ENCODE measurements at regions of chr1 and their contacts with region 1.

Region 1: GRCh38 chr1:61851849-61852669 is 109.8 kb downstream of the PATJ start:
- DNase-seq: peak; percentile 74
- H3K4me3 ChIP-seq: no peak overlapping the region
- H3K27ac ChIP-seq: peak overlapping the region; percentile 45
- H3K4me1 ChIP-seq: peaks cover 14% of the 10 kb centered on the region
- H3K27me3 ChIP-seq: no peaks in the 10 kb centered on the region
- CTCF ChIP-seq: peak; percentile 40 to 58
- POLR2A ChIP-seq: no peak

Region 2: DNA sequence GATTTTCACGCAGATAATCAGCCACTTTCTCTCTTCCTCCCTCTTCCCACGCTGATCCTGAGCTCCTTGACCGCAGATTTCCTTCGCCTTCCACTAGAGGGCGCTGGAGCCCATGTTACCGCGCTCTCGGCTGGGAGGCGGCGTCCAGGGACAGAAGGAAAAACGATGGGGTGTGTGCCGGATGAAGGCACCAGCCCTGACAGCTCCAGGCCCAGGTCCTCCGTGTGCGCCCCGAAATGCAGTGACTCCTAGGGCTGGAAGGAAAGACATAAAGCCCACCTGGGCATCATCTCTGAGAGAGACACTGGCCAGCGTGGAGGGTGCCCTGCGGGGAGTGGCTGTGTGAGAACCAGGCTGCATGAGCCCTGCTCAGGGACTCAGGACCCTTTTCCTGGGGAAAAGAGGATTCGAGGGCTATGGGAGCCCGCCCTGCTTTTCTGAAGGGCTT is 1880.6 kb before region 1 on chr1:
- CTCF ChIA-PET with region 1: interaction called, 64 read pairs
- POLR2A ChIA-PET with region 1: no interaction called
- dilution Hi-C with region 1: no loop called
- intact Hi-C with region 1: loop called (anchors 1 kb)
- DNase-seq: peak; percentile 63
- H3K4me3 ChIP-seq: no peak overlapping the region
- H3K27ac ChIP-seq: no peak overlapping the region
- H3K4me1 ChIP-seq: peaks cover 2% of the 10 kb centered on the region
- H3K27me3 ChIP-seq: peaks cover 0 to 11% of the 10 kb centered on the region in 2 experiments
- CTCF ChIP-seq: peak; percentile 83 to 91
- POLR2A ChIP-seq: no peak

Region 3: DNA sequence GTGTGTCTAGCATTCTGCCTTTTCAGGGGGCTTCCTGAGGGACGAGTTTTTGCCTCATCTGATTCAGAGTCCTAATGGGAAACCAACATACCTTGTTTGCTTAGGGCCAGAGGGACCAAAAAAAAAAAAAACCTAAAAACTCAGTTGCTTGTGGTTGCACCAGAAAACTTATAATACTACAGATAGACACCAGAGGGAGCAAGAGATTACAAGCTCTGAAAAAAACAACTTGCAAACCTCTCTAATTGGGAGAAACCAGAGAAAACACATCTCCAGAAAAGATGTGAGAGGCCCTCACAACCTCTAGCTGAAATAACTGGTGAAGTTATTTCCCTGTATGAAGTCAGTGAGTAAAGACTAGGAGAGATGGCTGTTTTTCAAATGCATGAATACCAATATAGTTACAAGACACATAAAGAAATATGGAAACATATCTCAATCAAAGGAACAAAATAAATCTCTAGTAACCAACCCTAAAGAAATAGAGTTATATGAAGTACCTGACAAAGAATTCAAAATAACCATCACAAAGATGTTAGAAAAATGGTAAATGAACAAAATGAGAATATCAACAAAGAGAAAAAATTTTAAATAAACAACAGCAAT is 1003.4 kb before region 1 on chr1:
- CTCF ChIA-PET with region 1: interaction called, 29 read pairs
- POLR2A ChIA-PET with region 1: no interaction called
- dilution Hi-C with region 1: no loop called
- intact Hi-C with region 1: loop called (anchors 1 kb)
- DNase-seq: peak; percentile 79
- H3K4me3 ChIP-seq: no peak overlapping the region
- H3K27ac ChIP-seq: no peak overlapping the region
- H3K4me1 ChIP-seq: no peaks in the 10 kb centered on the region
- H3K27me3 ChIP-seq: no peaks in the 10 kb centered on the region
- CTCF ChIP-seq: peak; percentile 35 to 45
- POLR2A ChIP-seq: no peak

Region 4: DNA sequence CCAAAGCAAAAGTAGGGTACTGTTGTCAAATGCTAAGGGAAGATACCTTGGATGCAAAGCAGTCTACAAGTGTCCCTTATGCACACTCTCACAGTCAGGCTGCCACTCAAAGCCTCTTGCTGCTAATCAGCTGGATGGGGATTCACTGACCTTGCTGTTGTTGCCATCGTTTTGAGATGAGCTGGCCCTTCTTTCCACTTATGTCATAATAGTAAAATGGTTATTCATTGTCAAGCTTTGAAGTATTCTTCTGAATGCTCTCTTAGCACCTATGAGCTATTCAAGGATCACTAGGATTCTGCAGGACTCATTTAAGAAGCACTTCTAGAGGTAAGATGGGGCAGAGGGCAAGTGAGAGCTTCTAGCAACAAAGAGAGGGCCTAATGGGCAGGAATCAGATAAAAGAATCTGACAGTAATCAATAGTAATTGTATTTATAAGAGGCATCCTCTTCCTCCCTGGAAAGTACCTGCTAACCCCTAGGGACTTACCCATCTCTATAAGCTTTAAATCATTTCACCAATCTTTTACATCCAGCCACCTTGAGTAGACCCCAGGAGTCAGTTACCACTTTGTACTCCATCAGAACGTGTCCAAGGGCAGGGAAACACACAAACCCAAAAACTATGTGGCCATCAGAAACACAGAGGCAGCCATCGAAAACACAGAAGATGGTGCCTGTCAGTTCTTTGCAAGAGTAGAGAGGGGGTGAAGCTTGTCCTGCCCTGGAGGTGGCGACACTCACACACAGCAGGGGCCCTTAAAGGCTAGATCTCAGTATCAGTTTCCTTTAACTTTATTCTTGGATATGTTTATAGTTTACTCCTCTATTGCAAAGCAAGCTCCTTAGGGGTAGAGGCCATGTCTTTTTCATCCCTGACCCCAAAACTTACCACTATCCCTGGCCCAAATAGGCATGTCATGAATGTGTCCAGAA is 873.4 kb before region 1 on chr1:
- CTCF ChIA-PET with region 1: interaction called, 49 read pairs
- POLR2A ChIA-PET with region 1: no interaction called
- dilution Hi-C with region 1: no loop called
- intact Hi-C with region 1: loop called (anchors 1 kb)
- DNase-seq: peak; percentile 69
- H3K4me3 ChIP-seq: no peak overlapping the region
- H3K27ac ChIP-seq: no peak overlapping the region
- H3K4me1 ChIP-seq: peaks cover 6% of the 10 kb centered on the region
- H3K27me3 ChIP-seq: no peaks in the 10 kb centered on the region
- CTCF ChIP-seq: peak; percentile 60 to 77
- POLR2A ChIP-seq: no peak

Region 5: DNA sequence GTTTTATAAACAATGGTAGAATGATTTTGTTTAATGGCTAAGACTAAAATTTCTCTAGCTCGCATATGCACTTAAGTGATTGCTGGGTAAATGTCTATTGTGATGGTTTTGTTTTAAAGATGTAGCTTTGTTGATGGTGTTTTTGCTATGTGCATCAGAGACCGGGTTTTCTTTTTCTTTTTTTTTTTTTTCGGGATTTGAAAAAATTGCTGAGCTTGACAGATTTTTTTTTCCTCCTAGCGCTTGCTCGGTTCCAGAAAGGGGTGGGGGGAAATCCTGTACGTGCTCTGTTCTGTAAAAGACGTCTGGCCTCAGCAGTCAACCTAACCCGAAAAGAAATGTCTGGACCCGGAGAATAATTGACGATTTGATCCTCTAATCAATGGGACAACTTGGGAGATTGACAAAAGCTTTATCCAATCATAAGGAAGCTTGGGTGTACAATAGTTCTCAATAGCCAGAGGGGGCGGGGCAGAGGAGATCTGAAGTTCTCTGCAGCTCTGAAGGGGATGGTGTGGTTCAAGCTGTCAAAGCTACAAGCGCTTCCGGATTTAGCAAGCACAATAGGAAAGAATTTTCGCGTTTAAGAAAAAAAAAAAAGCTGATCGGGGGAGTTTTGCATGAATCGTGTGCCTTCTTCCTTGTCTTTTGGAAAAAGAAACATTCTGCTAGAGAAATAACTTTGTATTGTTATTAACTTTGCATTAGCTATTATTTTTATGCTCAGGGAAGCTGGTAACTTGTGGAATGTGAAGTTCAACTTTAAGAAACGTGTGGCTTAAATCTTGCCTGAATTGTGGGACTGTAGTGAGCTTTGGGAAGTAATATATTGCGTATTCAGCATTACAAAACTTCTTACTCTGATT is 774.1 kb before region 1 on chr1:
- CTCF ChIA-PET with region 1: interaction called, 14 read pairs
- POLR2A ChIA-PET with region 1: no interaction called
- dilution Hi-C with region 1: no loop called
- intact Hi-C with region 1: loop called (anchors 1 kb)
- DNase-seq: peak; percentile 100
- H3K4me3 ChIP-seq: peak overlapping the region; percentile 44 to 97 (median 77)
- H3K27ac ChIP-seq: peak overlapping the region; percentile 45
- H3K4me1 ChIP-seq: peaks cover 41% of the 10 kb centered on the region
- H3K27me3 ChIP-seq: no peaks in the 10 kb centered on the region
- CTCF ChIP-seq: no peak
- POLR2A ChIP-seq: peak; percentile 10

Region 6: DNA sequence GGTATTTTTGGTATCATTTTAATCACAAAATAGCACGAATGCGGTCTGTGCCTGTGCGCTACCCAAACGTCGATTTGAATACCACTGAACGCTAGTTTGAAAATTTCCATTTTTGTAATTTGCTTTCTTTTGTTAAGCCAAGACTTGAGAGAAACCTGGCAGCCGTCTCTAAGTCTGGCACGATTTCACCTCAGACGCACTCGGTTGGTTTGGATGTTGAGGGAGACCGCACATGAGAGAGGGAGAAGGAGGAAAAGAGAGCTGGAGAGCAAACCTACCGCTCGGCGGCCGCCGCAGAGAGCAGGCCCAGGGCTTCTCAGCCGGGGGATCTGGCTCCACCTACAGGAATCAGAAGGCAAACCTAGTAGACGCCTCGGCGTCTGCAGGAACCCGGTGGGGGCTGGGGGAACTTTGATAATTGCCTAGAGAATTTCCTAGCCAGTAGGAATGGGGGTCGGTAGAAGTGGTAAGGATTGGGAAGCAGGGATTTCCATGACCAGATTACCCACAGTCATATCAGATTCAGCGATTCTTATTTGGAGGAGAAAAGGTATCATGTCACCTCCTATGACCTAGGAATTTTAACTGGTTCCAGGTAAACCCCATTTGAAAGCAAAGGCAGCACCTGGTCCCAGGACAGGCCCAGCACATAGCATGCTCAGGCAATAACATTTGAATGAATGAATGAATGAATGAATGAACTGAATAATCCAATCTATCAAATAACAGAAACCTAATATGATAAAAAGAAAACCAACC is 210.3 kb before region 1 on chr1:
- CTCF ChIA-PET with region 1: interaction called, 12 read pairs
- POLR2A ChIA-PET with region 1: no interaction called
- dilution Hi-C with region 1: no loop called
- intact Hi-C with region 1: loop called (anchors 2 kb)
- DNase-seq: peak; percentile 75
- H3K4me3 ChIP-seq: peak overlapping the region in 1 of 3 experiments; percentile 37
- H3K27ac ChIP-seq: no peak overlapping the region
- H3K4me1 ChIP-seq: peaks cover 7% of the 10 kb centered on the region
- H3K27me3 ChIP-seq: no peaks in the 10 kb centered on the region
- CTCF ChIP-seq: peak; percentile 60 to 90
- POLR2A ChIP-seq: no peak

Region 7: GRCh38 chr1:61865646-61866231 is 13.7 kb after region 1 on chr1:
- CTCF ChIA-PET with region 1: interaction called, 21 read pairs
- POLR2A ChIA-PET with region 1: no interaction called
- dilution Hi-C with region 1: no loop called
- intact Hi-C with region 1: no loop called
- DNase-seq: no peak
- H3K4me3 ChIP-seq: no peak overlapping the region
- H3K27ac ChIP-seq: no peak overlapping the region
- H3K4me1 ChIP-seq: no peaks in the 10 kb centered on the region
- H3K27me3 ChIP-seq: no peaks in the 10 kb centered on the region
- CTCF ChIP-seq: no peak
- POLR2A ChIP-seq: no peak

Region 8: DNA sequence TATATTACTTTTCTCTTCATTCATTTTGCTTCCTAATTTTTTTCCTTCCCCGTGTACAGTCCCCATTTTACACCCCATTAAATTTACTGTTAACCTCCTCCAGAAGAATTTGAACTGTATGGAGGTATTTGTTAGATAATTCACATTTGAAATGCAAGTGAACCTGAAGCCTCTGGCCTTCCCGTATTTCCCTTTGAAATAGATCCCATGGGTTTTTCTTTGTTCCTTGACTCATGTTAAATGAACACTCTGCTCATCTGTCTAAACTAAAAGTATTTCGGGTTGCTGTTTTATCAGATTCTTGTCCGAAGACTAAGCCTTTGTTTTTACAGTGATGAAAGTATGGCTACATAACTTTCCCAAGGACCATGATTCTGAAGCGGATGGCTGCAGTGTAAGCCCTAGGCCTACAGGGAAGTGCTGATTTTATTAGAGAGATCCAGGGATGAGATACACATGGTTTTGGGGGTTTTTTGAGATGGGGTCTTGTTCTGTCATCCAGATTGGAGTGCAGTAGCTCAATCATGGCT is 78.1 kb after region 1 on chr1:
- CTCF ChIA-PET with region 1: no interaction called
- POLR2A ChIA-PET with region 1: no interaction called
- dilution Hi-C with region 1: no loop called
- intact Hi-C with region 1: no loop called
- DNase-seq: no peak
- H3K4me3 ChIP-seq: no peak overlapping the region
- H3K27ac ChIP-seq: no peak overlapping the region
- H3K4me1 ChIP-seq: no peaks in the 10 kb centered on the region
- H3K27me3 ChIP-seq: peaks cover 0 to 2% of the 10 kb centered on the region in 2 experiments
- CTCF ChIP-seq: no peak
- POLR2A ChIP-seq: no peak

Region 9: DNA sequence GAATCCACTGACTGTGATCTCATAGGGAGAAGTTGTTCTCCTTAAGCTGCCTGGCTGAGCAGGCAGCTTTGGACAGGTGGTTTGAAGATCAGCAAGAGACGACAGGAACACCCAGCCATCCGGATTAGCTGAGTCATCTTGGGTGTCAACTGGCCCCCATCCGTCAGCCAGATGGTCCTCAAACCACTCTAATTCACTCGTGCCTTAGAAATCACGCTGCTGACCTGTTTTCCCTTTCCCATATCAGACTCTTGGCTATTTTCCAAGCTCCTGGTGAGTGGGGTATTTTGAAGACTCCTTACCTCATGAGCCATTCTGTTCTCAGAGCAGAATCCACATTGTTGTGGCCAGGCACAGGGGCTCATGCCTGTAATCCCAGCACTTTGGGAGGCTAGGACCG is 193.5 kb after region 1 on chr1:
- CTCF ChIA-PET with region 1: no interaction called
- POLR2A ChIA-PET with region 1: no interaction called
- dilution Hi-C with region 1: no loop called
- intact Hi-C with region 1: no loop called
- DNase-seq: no peak
- H3K4me3 ChIP-seq: no peak overlapping the region
- H3K27ac ChIP-seq: no peak overlapping the region
- H3K4me1 ChIP-seq: no peaks in the 10 kb centered on the region
- H3K27me3 ChIP-seq: no peaks in the 10 kb centered on the region
- CTCF ChIP-seq: no peak
- POLR2A ChIP-seq: no peak

Measured in endothelial cell of umbilical vein (primary cell).